Activated CD4-positive, alpha-beta memory T cell treated with anti-CD3 and anti-CD28 coated beads, Interleukin-2, amount 10 ng/mL, durations not matched to agents 7 days and 5 days (primary cell): ENCODE measurements at regions of chr1 and their contacts with region 1.

Region 1: GRCh38 chr1:26417111-26417759 is 6.6 kb downstream of the LIN28A start:
- DNase-seq: peak; percentile 87
- H3K4me3 Mint-ChIP-seq: no peak overlapping the region
- H3K27ac Mint-ChIP-seq: no peak overlapping the region
- H3K4me1 Mint-ChIP-seq: peaks cover 3% of the 10 kb centered on the region
- H3K27me3 Mint-ChIP-seq: peaks cover 60% of the 10 kb centered on the region

Region 2: GRCh38 chr1:26169669-26170471 is 247.4 kb before region 1 on chr1 and contains the start of gene ZNF593:
- CTCF ChIA-PET with region 1: interaction called, 12 read pairs
- POLR2A ChIA-PET with region 1: interaction called, 3 read pairs
- DNase-seq: peak; percentile 90
- H3K4me3 Mint-ChIP-seq: peak within 1 kb of the TSS; percentile 83
- H3K27ac Mint-ChIP-seq: peak within 1 kb of the TSS; percentile 70
- H3K4me1 Mint-ChIP-seq: peaks cover 32% of the 10 kb centered on the region
- H3K27me3 Mint-ChIP-seq: no peaks in the 10 kb centered on the region
- total RNA-seq, gene ZNF593: 20.3 to 22.9 TPM

Region 3: DNA sequence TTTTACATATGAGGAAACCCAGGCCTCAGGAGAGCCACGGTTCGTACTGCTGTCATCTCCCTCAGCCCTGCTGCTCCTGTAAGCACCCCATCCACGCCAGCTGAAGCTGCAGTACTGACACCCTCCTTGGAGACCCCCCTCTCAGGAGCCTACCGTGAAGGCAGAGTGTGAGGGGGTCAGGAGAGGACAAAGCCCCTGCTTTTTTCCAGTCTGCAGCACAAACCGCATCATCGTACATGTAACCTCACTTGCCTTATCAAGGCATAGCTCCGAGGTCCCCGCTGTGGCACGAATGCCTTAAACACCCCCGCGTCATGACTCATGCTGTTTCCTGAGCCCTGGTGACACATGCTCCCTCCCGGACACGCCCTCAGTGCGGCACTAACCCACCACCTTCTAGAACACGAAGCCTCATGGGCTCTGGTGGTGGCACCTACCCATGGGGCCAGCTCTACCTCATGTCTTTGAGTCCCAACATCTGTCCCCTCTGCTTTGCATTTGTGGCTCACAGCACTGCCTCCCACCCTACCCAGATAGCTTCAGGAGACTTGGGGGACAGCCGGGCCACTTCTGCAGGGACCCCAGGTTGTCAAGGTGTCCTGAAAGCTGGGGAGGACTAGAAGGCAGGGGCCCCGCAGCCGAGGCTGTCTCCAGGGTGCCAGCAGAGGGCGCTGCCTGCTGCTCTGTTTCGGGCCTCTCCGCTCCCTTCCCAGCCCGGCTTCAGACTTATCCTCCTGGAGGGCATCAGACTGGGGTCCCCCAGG is 132.5 kb before region 1 on chr1:
- CTCF ChIA-PET with region 1: interaction called, 66 read pairs
- POLR2A ChIA-PET with region 1: interaction called, 6 read pairs
- DNase-seq: peak; percentile 97
- H3K4me3 Mint-ChIP-seq: peak overlapping the region; percentile 82
- H3K27ac Mint-ChIP-seq: peak overlapping the region; percentile 98
- H3K4me1 Mint-ChIP-seq: peaks cover 91% of the 10 kb centered on the region
- H3K27me3 Mint-ChIP-seq: no peaks in the 10 kb centered on the region

Region 4: GRCh38 chr1:26358411-26359384 is 58.5 kb before region 1 on chr1:
- CTCF ChIA-PET with region 1: interaction called, 27 read pairs
- POLR2A ChIA-PET with region 1: no interaction called
- DNase-seq: peak; percentile 87
- H3K4me3 Mint-ChIP-seq: peak overlapping the region; percentile 14
- H3K27ac Mint-ChIP-seq: peak overlapping the region; percentile 48
- H3K4me1 Mint-ChIP-seq: peaks cover 60% of the 10 kb centered on the region
- H3K27me3 Mint-ChIP-seq: peaks cover 17% of the 10 kb centered on the region

Region 5: DNA sequence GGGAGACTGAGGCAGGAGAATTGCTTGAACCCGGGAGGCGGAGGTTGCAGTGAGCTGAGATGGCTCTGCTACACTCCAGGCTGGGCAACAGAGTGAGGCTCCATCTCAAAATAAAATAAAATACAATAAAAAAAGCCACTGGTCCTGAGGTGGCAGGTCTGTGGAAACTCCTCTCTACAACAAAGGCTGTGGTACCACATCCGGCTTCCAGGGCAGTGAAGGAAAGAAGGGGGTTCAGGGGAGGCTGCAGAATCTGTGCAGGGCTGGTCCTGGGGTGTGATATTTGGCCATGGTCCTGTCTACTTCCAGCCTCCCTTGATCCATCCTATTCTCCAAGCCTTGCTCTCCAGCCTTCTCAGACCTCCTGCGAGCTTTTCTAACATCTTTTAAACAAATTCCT is 44.0 kb before region 1 on chr1:
- CTCF ChIA-PET with region 1: interaction called, 17 read pairs
- POLR2A ChIA-PET with region 1: no interaction called
- DNase-seq: peak; percentile 67
- H3K4me3 Mint-ChIP-seq: no peak overlapping the region
- H3K27ac Mint-ChIP-seq: peak overlapping the region; percentile 84
- H3K4me1 Mint-ChIP-seq: peaks cover 83% of the 10 kb centered on the region
- H3K27me3 Mint-ChIP-seq: no peaks in the 10 kb centered on the region

Region 6: DNA sequence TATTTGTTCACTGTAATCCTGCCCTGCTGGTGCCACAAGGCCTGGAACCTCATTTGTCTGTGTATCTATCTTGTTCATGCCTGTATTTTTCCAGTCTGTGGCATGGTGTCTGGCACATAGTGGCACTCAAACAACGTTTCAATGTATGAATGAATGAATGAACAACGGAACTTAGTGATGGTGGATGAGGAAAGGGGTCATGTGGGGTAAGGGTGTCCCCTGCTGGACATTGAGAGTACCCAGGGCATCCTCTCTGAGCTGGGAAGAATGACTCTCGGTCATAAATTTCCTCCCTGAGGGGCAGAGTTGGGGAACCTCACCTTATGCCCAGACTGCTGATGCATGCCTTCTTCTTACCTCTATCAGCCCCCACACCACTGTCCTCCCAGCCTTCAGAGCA is 25.8 kb before region 1 on chr1:
- CTCF ChIA-PET with region 1: interaction called, 44 read pairs
- POLR2A ChIA-PET with region 1: interaction called, 3 read pairs
- DNase-seq: peak; percentile 74
- H3K4me3 Mint-ChIP-seq: no peak overlapping the region
- H3K27ac Mint-ChIP-seq: no peak overlapping the region
- H3K4me1 Mint-ChIP-seq: peaks cover 43% of the 10 kb centered on the region
- H3K27me3 Mint-ChIP-seq: peaks cover 7% of the 10 kb centered on the region

Region 7: GRCh38 chr1:26431979-26432695 is 14.9 kb after region 1 on chr1 and contains the start of gene DHDDS:
- CTCF ChIA-PET with region 1: interaction called, 24 read pairs
- POLR2A ChIA-PET with region 1: interaction called, 6 read pairs
- DNase-seq: peak; percentile 99
- H3K4me3 Mint-ChIP-seq: peak within 1 kb of the TSS; percentile 98
- H3K27ac Mint-ChIP-seq: peak within 1 kb of the TSS; percentile 92
- H3K4me1 Mint-ChIP-seq: peaks cover 24% of the 10 kb centered on the region
- H3K27me3 Mint-ChIP-seq: peaks cover 4% of the 10 kb centered on the region
- total RNA-seq, gene DHDDS: 49.7 to 52.3 TPM